Naive thymus-derived CD4-positive, alpha-beta T cell (primary cell): ENCODE measurements at regions of chr3 and their contacts with region 1.

Region 1: GRCh38 chr3:122679085-122679881 is 1.4 kb upstream of the PARP14 start:
- DNase-seq: peak; percentile 49 to 84 (median 79)
- ATAC-seq: peak; percentile 82
- H3K4me3 ChIP-seq: peak overlapping the region; percentile 87
- H3K4me3 Mint-ChIP-seq: peak overlapping the region; percentile 87 to 99 (median 94)
- H3K27ac ChIP-seq: peak overlapping the region; percentile 98
- H3K27ac Mint-ChIP-seq: peak overlapping the region; percentile 93 to 100 (median 98)
- H3K4me1 ChIP-seq: peaks cover 27 to 33% of the 10 kb centered on the region in 2 donors
- H3K4me1 Mint-ChIP-seq: peaks cover 40 to 57% (median 54%) of the 10 kb centered on the region in 7 donors
- H3K27me3 ChIP-seq: no peaks in the 10 kb centered on the region
- H3K27me3 Mint-ChIP-seq: no peaks in the 10 kb centered on the region

Region 2: GRCh38 chr3:121834696-121835464 is 844.4 kb before region 1 on chr3 and contains the starts of genes EAF2 and IQCB1:
- CTCF ChIA-PET with region 1: no interaction called
- POLR2A ChIA-PET with region 1: no interaction called
- intact Hi-C with region 1: loop called (anchors 2 to 10 kb)
- DNase-seq: peak; percentile 93 to 98 (median 97)
- ATAC-seq: peak; percentile 99
- H3K4me3 ChIP-seq: peak within 1 kb of the TSS; percentile 85
- H3K4me3 Mint-ChIP-seq: peak within 1 kb of the TSS; percentile 83 to 97 (median 93)
- H3K27ac ChIP-seq: peak within 1 kb of the TSS; percentile 89
- H3K27ac Mint-ChIP-seq: peak within 1 kb of the TSS; percentile 78 to 98 (median 92)
- H3K4me1 ChIP-seq: peaks cover 10 to 14% of the 10 kb centered on the region in 2 donors
- H3K4me1 Mint-ChIP-seq: peaks cover 32 to 65% (median 58%) of the 10 kb centered on the region in 7 donors
- H3K27me3 ChIP-seq: no peaks in the 10 kb centered on the region
- H3K27me3 Mint-ChIP-seq: no peaks in the 10 kb centered on the region
- total RNA-seq, gene EAF2: 6.4 to 16.1 (median 7.5) TPM
- total RNA-seq, gene IQCB1: 32.6 to 45.6 (median 35.8) TPM

Region 3: GRCh38 chr3:122415720-122416654 is 263.3 kb before region 1 on chr3 and contains the start of gene WDR5B:
- CTCF ChIA-PET with region 1: no interaction called
- POLR2A ChIA-PET with region 1: interaction called, 12 read pairs
- intact Hi-C with region 1: loop called (anchors 1 kb)
- DNase-seq: peak; percentile 95 to 99 (median 99)
- ATAC-seq: peak; percentile 94
- H3K4me3 ChIP-seq: peak within 1 kb of the TSS; percentile 96
- H3K4me3 Mint-ChIP-seq: peak within 1 kb of the TSS; percentile 92 to 99 (median 97)
- H3K27ac ChIP-seq: peak within 1 kb of the TSS; percentile 93
- H3K27ac Mint-ChIP-seq: peak within 1 kb of the TSS; percentile 98 to 100 (median 100)
- H3K4me1 ChIP-seq: peaks cover 19 to 24% of the 10 kb centered on the region in 2 donors
- H3K4me1 Mint-ChIP-seq: peaks cover 24 to 72% (median 65%) of the 10 kb centered on the region in 7 donors
- H3K27me3 ChIP-seq: no peaks in the 10 kb centered on the region
- H3K27me3 Mint-ChIP-seq: peaks cover 0 to 3% (median 0%) of the 10 kb centered on the region in 5 donors
- total RNA-seq, gene WDR5B: 4.8 to 19.4 (median 6.4) TPM

Region 4: DNA sequence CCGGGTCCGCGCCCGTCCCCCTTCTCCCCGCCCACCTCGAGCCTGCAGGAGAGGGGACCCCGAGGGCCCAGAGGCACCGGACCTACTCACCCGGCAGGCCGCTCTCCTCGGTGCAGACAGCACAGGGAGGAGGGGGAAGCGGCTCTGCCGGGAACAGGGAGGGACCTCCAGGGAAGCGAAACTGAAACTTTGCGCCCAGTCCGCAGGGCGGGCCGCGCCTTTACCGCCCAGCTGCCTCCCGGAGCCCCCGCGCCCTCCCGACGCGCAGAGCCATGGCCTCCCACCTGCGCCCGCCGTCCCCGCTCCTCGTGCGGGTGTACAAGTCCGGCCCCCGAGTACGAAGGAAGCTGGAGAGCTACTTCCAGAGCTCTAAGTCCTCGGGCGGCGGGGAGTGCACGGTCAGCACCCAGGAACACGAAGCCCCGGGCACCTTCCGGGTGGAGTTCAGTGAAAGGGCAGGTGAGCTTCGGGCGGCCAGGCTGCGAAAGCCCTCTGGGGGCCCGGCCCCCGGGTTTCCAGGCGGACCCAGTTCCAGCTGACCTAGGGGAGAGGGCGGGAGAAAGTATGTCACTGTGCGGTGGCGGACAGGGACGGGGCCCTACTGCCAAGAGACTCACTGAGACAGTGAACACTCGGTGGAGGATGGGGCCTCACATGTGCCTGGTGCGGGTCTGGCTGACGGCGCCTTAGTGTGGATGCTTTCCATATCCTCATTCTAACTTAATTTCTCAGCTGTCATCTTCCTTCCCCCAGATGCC is 114.9 kb before region 1 on chr3 and contains the starts of genes DTX3L and PARP9:
- CTCF ChIA-PET with region 1: interaction called, 154 read pairs
- POLR2A ChIA-PET with region 1: interaction called, 84 read pairs
- intact Hi-C with region 1: loop called (anchors 1 kb)
- DNase-seq: peak; percentile 50 to 82 (median 77)
- ATAC-seq: peak; percentile 95
- H3K4me3 ChIP-seq: peak within 1 kb of the TSS; percentile 75
- H3K4me3 Mint-ChIP-seq: peak within 1 kb of the TSS; percentile 88 to 100 (median 98)
- H3K27ac ChIP-seq: peak within 1 kb of the TSS; percentile 98
- H3K27ac Mint-ChIP-seq: peak within 1 kb of the TSS; percentile 97 to 99 (median 98)
- H3K4me1 ChIP-seq: peaks cover 34 to 45% of the 10 kb centered on the region in 2 donors
- H3K4me1 Mint-ChIP-seq: peaks cover 58 to 91% (median 79%) of the 10 kb centered on the region in 7 donors
- H3K27me3 ChIP-seq: no peaks in the 10 kb centered on the region
- H3K27me3 Mint-ChIP-seq: no peaks in the 10 kb centered on the region
- total RNA-seq, gene DTX3L: 28.6 to 164 (median 35.8) TPM
- total RNA-seq, gene PARP9: 17.6 to 165 (median 24.4) TPM

Region 5: DNA sequence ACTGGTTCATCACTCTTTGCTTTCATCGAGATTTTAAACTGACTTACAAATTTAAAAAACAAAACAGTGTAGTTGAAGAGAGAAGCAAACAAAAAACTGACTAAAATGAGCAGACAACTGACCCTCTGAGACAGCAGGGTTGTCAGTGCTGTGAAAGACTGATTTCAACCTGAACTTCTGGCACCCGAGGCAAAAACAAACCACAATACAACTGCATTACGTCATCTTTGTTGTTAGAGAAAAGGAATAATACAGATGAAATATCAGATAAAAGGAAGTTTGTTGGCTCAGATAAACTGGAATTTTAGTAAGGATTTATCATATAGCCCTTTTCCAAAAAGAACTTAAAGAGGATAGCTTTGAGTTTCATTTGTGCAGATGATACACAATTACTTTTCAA is 50.7 kb before region 1 on chr3:
- CTCF ChIA-PET with region 1: interaction called, 11 read pairs
- POLR2A ChIA-PET with region 1: no interaction called
- intact Hi-C with region 1: no loop called
- DNase-seq: no peak
- ATAC-seq: no peak
- H3K4me3 ChIP-seq: no peak overlapping the region
- H3K4me3 Mint-ChIP-seq: no peak overlapping the region
- H3K27ac ChIP-seq: no peak overlapping the region
- H3K27ac Mint-ChIP-seq: peak overlapping the region in 1 of 9 donors; percentile 41
- H3K4me1 ChIP-seq: no peaks in the 10 kb centered on the region
- H3K4me1 Mint-ChIP-seq: peaks cover 0 to 9% (median 0%) of the 10 kb centered on the region in 7 donors
- H3K27me3 ChIP-seq: no peaks in the 10 kb centered on the region
- H3K27me3 Mint-ChIP-seq: no peaks in the 10 kb centered on the region

Region 6: GRCh38 chr3:122745346-122746021 is 66.2 kb after region 1 on chr3:
- CTCF ChIA-PET with region 1: no interaction called
- POLR2A ChIA-PET with region 1: no interaction called
- intact Hi-C with region 1: no loop called
- DNase-seq: no peak
- ATAC-seq: no peak
- H3K4me3 ChIP-seq: no peak overlapping the region
- H3K4me3 Mint-ChIP-seq: no peak overlapping the region
- H3K27ac ChIP-seq: no peak overlapping the region
- H3K27ac Mint-ChIP-seq: no peak overlapping the region
- H3K4me1 ChIP-seq: no peaks in the 10 kb centered on the region
- H3K4me1 Mint-ChIP-seq: peaks cover 0 to 7% (median 0%) of the 10 kb centered on the region in 7 donors
- H3K27me3 ChIP-seq: no peaks in the 10 kb centered on the region
- H3K27me3 Mint-ChIP-seq: no peaks in the 10 kb centered on the region

Region 7: DNA sequence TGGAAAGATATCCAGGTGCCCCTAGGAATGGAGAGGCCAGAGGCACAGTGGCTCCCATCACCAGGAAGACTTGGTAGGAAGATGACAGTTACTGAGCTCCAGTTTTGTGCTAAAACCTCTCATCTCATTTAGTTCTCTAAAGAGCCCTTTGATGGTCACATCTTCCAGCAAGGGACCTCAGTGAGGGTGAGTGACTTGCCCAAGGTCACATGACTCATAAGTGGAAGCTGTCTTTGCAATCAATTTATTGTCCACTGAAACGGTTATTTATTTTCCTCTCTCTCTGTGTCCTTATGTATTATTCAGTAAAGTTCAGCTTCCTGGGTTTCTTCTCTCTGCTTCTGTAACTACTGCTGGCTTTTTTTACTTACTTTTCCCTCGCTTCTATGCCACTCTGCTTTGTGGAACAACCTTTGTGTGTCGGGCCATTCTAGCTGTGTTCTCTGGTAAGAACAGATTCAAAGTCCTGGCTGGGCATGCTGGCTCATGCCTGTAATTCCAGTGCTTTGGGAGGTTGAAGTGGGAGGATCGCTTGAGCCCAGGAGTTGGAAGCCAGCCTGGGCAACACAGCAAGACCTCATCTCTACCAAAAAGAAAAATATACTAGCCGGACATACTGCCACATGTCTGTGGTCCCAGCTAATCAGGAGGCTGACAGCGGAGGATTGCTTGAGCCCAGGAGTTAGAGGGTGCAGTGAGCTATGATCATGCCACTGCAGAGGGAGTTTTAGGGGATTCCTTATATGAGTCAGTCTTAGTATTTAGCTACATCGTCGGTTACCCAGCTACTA is 443.4 kb after region 1 on chr3:
- CTCF ChIA-PET with region 1: no interaction called
- POLR2A ChIA-PET with region 1: no interaction called
- intact Hi-C with region 1: no loop called
- DNase-seq: no peak
- ATAC-seq: no peak
- H3K4me3 ChIP-seq: no peak overlapping the region
- H3K4me3 Mint-ChIP-seq: no peak overlapping the region
- H3K27ac ChIP-seq: no peak overlapping the region
- H3K27ac Mint-ChIP-seq: peak overlapping the region in 1 of 9 donors; percentile 62
- H3K4me1 ChIP-seq: no peaks in the 10 kb centered on the region
- H3K4me1 Mint-ChIP-seq: peaks cover 0 to 4% (median 0%) of the 10 kb centered on the region in 7 donors
- H3K27me3 ChIP-seq: no peaks in the 10 kb centered on the region
- H3K27me3 Mint-ChIP-seq: no peaks in the 10 kb centered on the region

Region 8: GRCh38 chr3:123201566-123202427 is 522.5 kb after region 1 on chr3 and contains the start of gene SEC22A:
- CTCF ChIA-PET with region 1: no interaction called
- POLR2A ChIA-PET with region 1: no interaction called
- intact Hi-C with region 1: loop called in 1 of 2 experiments (anchors 5 kb)
- DNase-seq: peak; percentile 89 to 99 (median 97)
- ATAC-seq: peak; percentile 97
- H3K4me3 ChIP-seq: peak within 1 kb of the TSS; percentile 90
- H3K4me3 Mint-ChIP-seq: peak within 1 kb of the TSS; percentile 82 to 98 (median 92)
- H3K27ac ChIP-seq: peak within 1 kb of the TSS; percentile 99
- H3K27ac Mint-ChIP-seq: peak within 1 kb of the TSS; percentile 97 to 100 (median 99)
- H3K4me1 ChIP-seq: peaks cover 12% of the 10 kb centered on the region in 2 donors
- H3K4me1 Mint-ChIP-seq: peaks cover 13 to 41% (median 31%) of the 10 kb centered on the region in 7 donors
- H3K27me3 ChIP-seq: no peaks in the 10 kb centered on the region
- H3K27me3 Mint-ChIP-seq: peaks cover 0 to 9% (median 2%) of the 10 kb centered on the region in 5 donors
- total RNA-seq, gene SEC22A: 15.0 to 20.1 (median 17.1) TPM